ENCODE measurements at regions of chr11 and their contacts with region 1.

Region 1: DNA sequence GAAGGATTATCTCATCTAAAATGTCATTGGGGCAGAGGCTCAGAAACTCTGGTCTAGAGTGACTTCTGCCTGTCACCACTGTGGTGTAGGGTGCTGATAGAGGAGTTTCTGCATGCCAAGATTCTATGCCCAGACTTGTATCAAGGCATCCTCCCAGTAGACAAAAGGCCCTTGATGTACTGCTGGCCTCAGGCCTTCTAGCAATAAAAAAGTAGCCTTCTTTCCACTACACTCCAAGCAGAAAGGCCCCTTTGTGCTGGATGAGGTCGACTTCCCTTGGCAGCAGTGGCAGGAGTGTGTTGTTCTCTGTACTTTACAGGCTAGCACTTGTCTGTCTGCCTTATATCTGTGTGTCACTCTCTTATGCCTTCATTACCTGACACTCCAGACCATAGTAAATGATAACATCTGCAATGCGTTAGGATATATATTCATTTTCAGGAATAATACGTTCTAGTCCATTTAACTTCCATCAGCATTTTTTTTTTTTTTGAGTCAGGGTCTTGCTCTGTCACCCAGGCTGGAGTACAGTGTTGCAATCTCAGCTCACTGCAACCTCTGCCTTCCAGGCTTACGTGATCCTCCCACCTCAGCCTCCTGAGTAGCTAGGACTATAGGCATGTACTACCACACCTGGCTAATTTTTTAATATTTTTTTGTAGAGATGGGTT is 49.5 kb upstream of the RRM1 start:
- DNase-seq: no peak
- ATAC-seq: no peak
- H3K4me3 ChIP-seq: no peak overlapping the region
- H3K4me3 Mint-ChIP-seq: no peak overlapping the region
- H3K27ac ChIP-seq: no peak overlapping the region
- H3K27ac Mint-ChIP-seq: peak overlapping the region; percentile 70
- H3K4me1 ChIP-seq: peaks cover 8% of the 10 kb centered on the region
- H3K4me1 Mint-ChIP-seq: peaks cover 45% of the 10 kb centered on the region
- H3K27me3 ChIP-seq: no peaks in the 10 kb centered on the region
- H3K27me3 Mint-ChIP-seq: no peaks in the 10 kb centered on the region
- CTCF ChIP-seq: no peak

Region 2: DNA sequence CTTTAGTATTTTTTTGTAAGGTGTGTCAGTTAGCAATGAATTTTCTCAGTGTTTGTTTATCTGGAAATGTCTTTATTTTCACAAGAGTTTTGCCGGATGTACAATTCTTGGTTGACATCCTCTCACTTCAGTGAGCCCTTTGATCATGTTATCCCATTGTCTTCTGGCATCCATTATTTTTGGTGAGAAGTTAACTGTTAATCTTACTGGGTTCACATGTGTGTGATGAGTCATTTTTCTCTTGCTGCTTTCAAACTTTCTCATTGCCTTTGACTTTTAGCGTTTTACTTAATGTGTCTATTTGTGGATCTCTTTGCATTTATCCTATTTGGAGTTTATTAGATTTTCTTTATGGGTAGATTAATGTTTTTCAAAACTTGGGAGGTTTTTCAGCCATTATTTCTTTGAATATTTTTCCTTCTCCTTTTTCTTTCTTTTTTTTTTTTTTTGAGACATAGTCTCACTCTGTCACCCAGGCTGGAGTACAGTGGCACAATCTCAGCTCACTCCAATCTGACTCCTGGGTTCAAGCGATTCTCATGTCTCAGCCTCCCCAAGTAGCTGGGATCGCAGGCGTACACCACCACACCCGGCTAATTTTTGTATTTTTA is 51.0 kb before region 1 on chr11:
- CTCF ChIA-PET with region 1: no interaction called
- POLR2A ChIA-PET with region 1: no interaction called
- intact Hi-C with region 1: loop called in 1 of 2 experiments (anchors 5 kb)
- DNase-seq: peak in 1 of 9 experiments; percentile 31
- ATAC-seq: peak; percentile 51
- H3K4me3 ChIP-seq: no peak overlapping the region
- H3K4me3 Mint-ChIP-seq: no peak overlapping the region
- H3K27ac ChIP-seq: no peak overlapping the region
- H3K27ac Mint-ChIP-seq: no peak overlapping the region
- H3K4me1 ChIP-seq: peaks cover 38% of the 10 kb centered on the region
- H3K4me1 Mint-ChIP-seq: peaks cover 70% of the 10 kb centered on the region
- H3K27me3 ChIP-seq: no peaks in the 10 kb centered on the region
- H3K27me3 Mint-ChIP-seq: no peaks in the 10 kb centered on the region
- CTCF ChIP-seq: no peak

Region 3: DNA sequence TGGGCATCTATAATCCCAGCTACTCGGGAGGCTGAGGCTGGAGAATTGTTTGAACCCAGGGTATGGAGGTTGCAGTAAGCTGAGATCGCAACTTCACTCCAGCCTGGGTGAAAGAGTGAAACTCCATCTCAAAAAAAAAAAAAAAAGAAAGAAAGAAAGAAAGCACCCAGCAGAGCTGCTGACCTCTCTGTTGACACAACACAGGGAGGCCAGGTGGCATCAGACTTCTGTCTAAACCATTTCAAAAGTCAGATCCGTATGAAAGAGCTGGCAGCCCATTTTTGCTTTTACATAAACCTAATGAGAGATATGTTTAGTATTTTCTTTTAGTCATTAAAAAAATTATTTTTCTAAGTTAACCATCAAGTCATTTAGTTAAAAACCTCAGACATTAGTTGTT is 14.9 kb before region 1 on chr11:
- CTCF ChIA-PET with region 1: interaction called, 3 read pairs
- POLR2A ChIA-PET with region 1: interaction called, 3 read pairs
- intact Hi-C with region 1: loop called in 1 of 2 experiments (anchors 1 kb)
- DNase-seq: no peak
- ATAC-seq: no peak
- H3K4me3 ChIP-seq: no peak overlapping the region
- H3K4me3 Mint-ChIP-seq: no peak overlapping the region
- H3K27ac ChIP-seq: no peak overlapping the region
- H3K27ac Mint-ChIP-seq: peak overlapping the region; percentile 13
- H3K4me1 ChIP-seq: no peaks in the 10 kb centered on the region
- H3K4me1 Mint-ChIP-seq: peaks cover 22% of the 10 kb centered on the region
- H3K27me3 ChIP-seq: no peaks in the 10 kb centered on the region
- H3K27me3 Mint-ChIP-seq: no peaks in the 10 kb centered on the region
- CTCF ChIP-seq: no peak